SK-N-SH (cell line): ENCODE measurements at regions of chr14 and their contacts with region 1.

Region 1: GRCh38 chr14:103057365-103058096 is at the start of gene CDC42BPB:
- DNase-seq: peak; percentile 98
- H3K4me3 ChIP-seq: peak within 1 kb of the TSS; percentile 91 to 99
- H3K27ac ChIP-seq: peak within 1 kb of the TSS; percentile 75 to 89
- H3K4me1 ChIP-seq: peaks cover 23 to 26% of the 10 kb centered on the region in 2 experiments; a peak in 3 of 4 replicates
- H3K27me3 ChIP-seq: no peaks in the 10 kb centered on the region
- CTCF ChIP-seq: no peak
- EP300 ChIP-seq: no peak
- RAD21 ChIP-seq: no peak
- polyA plus RNA-seq, gene CDC42BPB: 59.7 and 61.6 TPM in 2 replicates

Region 2: DNA sequence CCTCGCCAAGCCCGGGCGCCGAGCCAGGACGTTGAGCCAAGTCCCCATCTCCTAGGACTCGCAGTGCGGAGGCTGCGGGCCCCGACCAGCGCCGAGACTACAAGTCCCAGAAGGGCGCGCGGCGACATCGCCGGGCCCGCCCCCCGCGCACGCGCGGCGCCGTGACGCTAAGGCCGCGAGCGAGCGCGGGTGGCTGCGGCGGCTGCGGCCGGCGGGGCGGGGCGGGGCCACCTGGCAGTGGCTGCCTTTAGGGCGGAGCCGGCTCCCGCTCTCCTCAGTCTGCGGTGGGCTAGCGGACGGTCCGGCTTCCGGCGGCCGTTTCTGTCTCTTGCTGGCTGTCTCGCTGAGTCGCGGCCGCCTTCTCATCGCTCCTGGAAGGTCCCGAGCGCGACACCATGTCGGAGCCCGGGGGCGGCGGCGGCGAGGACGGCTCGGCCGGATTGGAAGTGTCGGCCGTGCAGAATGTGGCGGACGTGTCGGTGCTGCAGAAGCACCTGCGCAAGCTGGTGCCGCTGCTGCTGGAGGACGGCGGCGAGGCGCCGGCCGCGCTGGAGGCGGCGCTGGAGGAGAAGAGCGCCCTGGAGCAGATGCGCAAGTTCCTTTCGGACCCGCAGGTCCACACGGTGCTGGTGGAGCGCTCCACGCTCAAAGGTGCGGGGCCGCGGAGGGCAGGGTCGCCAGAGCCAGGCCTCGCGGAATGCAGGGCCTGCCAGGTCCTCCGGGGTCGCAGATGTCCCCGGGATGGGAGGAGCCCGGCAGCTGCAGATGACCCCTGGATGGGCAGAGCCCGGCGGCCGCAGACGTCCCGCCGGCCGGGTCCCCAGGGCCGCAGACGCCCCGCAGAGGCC is 1093.0 kb before region 1 on chr14 and contains the start of gene DYNC1H1:
- CTCF ChIA-PET with region 1: no interaction called
- POLR2A ChIA-PET with region 1: no interaction called
- DNase-seq: peak; percentile 96
- H3K4me3 ChIP-seq: peak within 1 kb of the TSS; percentile 90 to 97
- H3K27ac ChIP-seq: peak within 1 kb of the TSS; percentile 83 to 92
- H3K4me1 ChIP-seq: peaks cover 22 to 37% of the 10 kb centered on the region in 2 experiments; a peak in 3 of 4 replicates
- H3K27me3 ChIP-seq: no peaks in the 10 kb centered on the region
- CTCF ChIP-seq: no peak
- EP300 ChIP-seq: no peak
- RAD21 ChIP-seq: no peak
- polyA plus RNA-seq, gene DYNC1H1: 110 and 140 TPM in 2 replicates

Region 3: DNA sequence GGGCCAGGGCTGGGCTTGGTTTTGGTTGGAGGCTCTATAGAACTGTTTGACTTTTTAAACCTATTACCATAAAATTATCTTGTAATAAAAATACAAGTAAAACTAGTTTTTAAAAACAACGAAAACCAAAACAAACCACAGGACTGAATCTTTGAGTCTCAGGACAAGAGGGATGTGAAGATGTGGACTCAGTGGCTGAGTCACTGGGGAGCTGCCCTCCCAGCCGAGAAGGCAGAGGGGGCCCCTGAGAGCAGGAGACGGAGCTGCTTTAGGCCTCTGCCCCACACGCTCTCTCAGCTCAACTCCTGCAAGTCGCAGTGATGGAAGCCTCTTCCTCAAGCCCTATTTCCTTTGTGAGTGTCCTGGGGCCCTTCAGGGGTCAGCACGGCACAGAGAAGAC is 59.1 kb before region 1 on chr14:
- CTCF ChIA-PET with region 1: no interaction called
- POLR2A ChIA-PET with region 1: no interaction called
- DNase-seq: no peak
- H3K4me3 ChIP-seq: no peak overlapping the region
- H3K27ac ChIP-seq: no peak overlapping the region
- H3K4me1 ChIP-seq: peaks cover 0 to 4% of the 10 kb centered on the region in 2 experiments; a peak in 1 of 4 replicates
- H3K27me3 ChIP-seq: no peaks in the 10 kb centered on the region
- CTCF ChIP-seq: no peak
- EP300 ChIP-seq: no peak
- RAD21 ChIP-seq: no peak

Region 4: DNA sequence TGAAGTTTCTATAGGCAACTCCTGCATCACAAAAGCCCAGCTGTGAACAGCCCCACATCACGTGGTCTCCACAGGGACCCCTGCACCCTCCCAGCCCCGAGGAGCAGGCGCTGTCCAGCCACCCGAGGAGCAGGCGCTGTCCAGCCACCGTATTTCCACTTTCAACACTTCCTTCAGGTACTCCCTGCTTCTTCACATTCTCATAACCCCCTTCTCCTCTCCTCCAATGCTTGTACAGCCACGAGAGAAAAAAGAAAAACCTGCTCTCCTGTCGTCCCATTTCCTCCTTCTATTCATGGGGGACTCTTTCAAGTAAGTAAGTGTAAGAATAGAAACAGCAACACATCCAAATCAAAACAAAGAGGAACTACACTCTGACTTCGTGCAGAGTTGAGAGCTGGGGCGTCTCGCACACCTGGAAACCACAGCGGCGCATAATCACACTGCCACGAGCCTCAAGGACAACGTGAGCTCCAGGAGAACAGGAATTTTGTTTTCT is 12.1 kb before region 1 on chr14:
- CTCF ChIA-PET with region 1: interaction called, 12 read pairs
- POLR2A ChIA-PET with region 1: no interaction called
- DNase-seq: no peak
- H3K4me3 ChIP-seq: no peak overlapping the region
- H3K27ac ChIP-seq: no peak overlapping the region
- H3K4me1 ChIP-seq: peaks cover 0 to 6% of the 10 kb centered on the region in 2 experiments; a peak in 1 of 4 replicates
- H3K27me3 ChIP-seq: no peaks in the 10 kb centered on the region
- CTCF ChIP-seq: no peak
- EP300 ChIP-seq: no peak
- RAD21 ChIP-seq: no peak